Adrenal gland (tissue), 19 donors: ENCODE measurements at regions of chr14 and their contacts with region 1.

Region 1: GRCh38 chr14:101774006-101774795 is 12.7 kb downstream of the PPP2R5C start:
- DNase-seq: peak in 3 of 7 donors; percentile 15 to 50 (median 19)
- H3K4me3 ChIP-seq: no peak overlapping the region
- H3K27ac ChIP-seq: peak overlapping the region in 4 of 5 donors; percentile 11 to 81 (median 70)
- H3K4me1 ChIP-seq: peaks cover 8 to 10% of the 10 kb centered on the region in 2 donors
- H3K27me3 ChIP-seq: no peaks in the 10 kb centered on the region
- CTCF ChIP-seq: no peak
- POLR2A ChIP-seq: no peak

Region 2: GRCh38 chr14:101889898-101890297 is 115.7 kb after region 1 on chr14:
- intact Hi-C with region 1: loop called (anchors 10 kb)
- DNase-seq: peak in 1 of 7 donors; percentile 34
- H3K4me3 ChIP-seq: no peak overlapping the region
- H3K27ac ChIP-seq: no peak overlapping the region
- H3K4me1 ChIP-seq: no peaks in the 10 kb centered on the region
- H3K27me3 ChIP-seq: no peaks in the 10 kb centered on the region
- CTCF ChIP-seq: peak in 5 of 6 experiments; percentile 19 to 42 (median 23)
- POLR2A ChIP-seq: no peak